ENCODE measurements at regions of chr21 and their contacts with region 1.

Region 1: GRCh38 chr21:25561668-25562641 is 45.3 kb downstream of the MRPL39 start:
- DNase-seq: peak; percentile 90
- ATAC-seq: peak; percentile 70
- H3K4me3 Mint-ChIP-seq: peak overlapping the region; percentile 83
- H3K27ac Mint-ChIP-seq: peak overlapping the region; percentile 98
- H3K4me1 Mint-ChIP-seq: peaks cover 42% of the 10 kb centered on the region
- H3K27me3 Mint-ChIP-seq: no peaks in the 10 kb centered on the region
- CTCF ChIP-seq: no peak

Region 2: GRCh38 chr21:25396135-25396711 is 165.7 kb before region 1 on chr21:
- CTCF ChIA-PET with region 1: no interaction called
- POLR2A ChIA-PET with region 1: interaction called, 11 read pairs
- intact Hi-C with region 1: no loop called
- DNase-seq: peak; percentile 91
- ATAC-seq: peak; percentile 96
- H3K4me3 Mint-ChIP-seq: peak overlapping the region; percentile 25
- H3K27ac Mint-ChIP-seq: peak overlapping the region; percentile 84
- H3K4me1 Mint-ChIP-seq: peaks cover 27% of the 10 kb centered on the region
- H3K27me3 Mint-ChIP-seq: no peaks in the 10 kb centered on the region
- CTCF ChIP-seq: no peak

Region 3: DNA sequence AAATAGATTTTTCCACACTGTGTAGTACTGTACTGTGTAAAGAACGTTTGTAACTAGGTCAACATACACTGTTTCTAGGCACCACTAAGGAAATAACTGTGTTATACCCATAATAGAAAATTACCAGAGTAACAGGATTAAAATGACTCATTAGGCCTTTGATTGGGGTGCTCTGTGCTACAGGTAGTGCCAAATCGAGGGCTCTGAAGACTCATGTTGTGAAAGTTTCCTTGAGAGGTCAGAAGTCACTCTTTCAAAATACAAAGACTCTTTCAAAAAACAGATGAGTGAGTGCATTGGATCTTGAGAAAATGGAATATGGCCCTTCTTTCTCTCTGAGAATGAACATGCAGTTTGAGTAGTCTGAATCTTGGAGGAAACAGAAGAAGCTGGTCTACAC is 97.7 kb before region 1 on chr21:
- CTCF ChIA-PET with region 1: no interaction called
- POLR2A ChIA-PET with region 1: interaction called, 117 read pairs
- intact Hi-C with region 1: no loop called
- DNase-seq: peak; percentile 48
- ATAC-seq: peak; percentile 74
- H3K4me3 Mint-ChIP-seq: peak overlapping the region; percentile 49
- H3K27ac Mint-ChIP-seq: peak overlapping the region; percentile 98
- H3K4me1 Mint-ChIP-seq: peaks cover 76% of the 10 kb centered on the region
- H3K27me3 Mint-ChIP-seq: no peaks in the 10 kb centered on the region
- CTCF ChIP-seq: no peak

Region 4: DNA sequence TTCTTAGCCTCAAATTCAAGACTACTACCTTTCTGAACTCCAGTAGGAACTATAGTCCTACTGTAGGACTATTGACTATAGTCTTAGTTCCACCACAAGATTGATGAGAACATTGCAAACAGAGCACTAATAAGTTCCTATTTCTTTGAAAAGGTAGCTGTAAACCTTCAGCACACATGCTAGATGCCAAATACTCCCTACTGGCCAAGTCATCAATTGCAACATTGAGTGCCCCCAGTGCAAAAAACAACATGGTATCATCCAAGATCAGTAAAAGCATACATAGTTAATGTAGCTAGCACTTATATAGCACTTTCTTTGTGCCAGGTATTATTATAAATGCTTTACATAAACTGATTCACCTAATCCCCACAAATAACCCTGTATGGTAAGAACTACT is 54.4 kb before region 1 on chr21:
- CTCF ChIA-PET with region 1: interaction called, 6 read pairs
- POLR2A ChIA-PET with region 1: interaction called, 179 read pairs
- intact Hi-C with region 1: loop called (anchors 2 kb)
- DNase-seq: peak; percentile 46
- ATAC-seq: peak; percentile 43
- H3K4me3 Mint-ChIP-seq: peak overlapping the region; percentile 50
- H3K27ac Mint-ChIP-seq: peak overlapping the region; percentile 55
- H3K4me1 Mint-ChIP-seq: peaks cover 63% of the 10 kb centered on the region
- H3K27me3 Mint-ChIP-seq: no peaks in the 10 kb centered on the region
- CTCF ChIP-seq: peak; percentile 28

Region 5: DNA sequence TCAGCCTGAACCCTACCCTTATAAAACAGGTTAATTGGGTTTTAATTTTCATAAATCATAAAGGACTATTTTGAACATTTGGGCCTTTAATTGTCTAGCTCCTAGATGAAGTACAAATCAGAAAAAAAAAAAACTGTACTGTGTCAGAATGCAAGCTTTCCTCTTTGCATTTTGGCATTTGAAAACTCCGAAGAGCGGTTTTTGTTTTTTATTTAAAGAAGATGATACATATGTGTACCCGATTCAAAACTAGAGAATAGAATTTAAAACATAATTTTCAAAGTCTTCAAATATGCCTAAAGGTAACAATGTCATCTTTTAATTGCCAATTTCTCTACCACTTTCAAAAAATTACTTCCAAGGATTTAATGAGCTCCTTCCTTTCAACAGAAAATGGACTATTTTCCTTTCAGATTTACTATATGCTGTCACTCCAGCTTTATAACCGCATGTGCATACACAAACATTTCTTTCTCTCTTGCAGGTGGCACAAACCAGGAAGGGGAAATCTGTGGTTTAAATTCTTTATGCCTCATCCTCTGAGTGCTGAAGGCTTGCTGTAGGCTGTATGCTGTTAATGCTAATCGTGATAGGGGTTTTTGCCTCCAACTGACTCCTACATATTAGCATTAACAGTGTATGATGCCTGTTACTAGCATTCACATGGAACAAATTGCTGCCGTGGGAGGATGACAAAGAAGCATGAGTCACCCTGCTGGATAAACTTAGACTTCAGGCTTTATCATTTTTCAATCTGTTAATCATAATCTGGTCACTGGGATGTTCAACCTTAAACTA is 11.7 kb after region 1 on chr21:
- CTCF ChIA-PET with region 1: interaction called, 5 read pairs
- POLR2A ChIA-PET with region 1: interaction called, 521 read pairs
- intact Hi-C with region 1: loop called (anchors 2 kb)
- DNase-seq: peak; percentile 87
- ATAC-seq: peak; percentile 45
- H3K4me3 Mint-ChIP-seq: peak overlapping the region; percentile 83
- H3K27ac Mint-ChIP-seq: peak overlapping the region; percentile 97
- H3K4me1 Mint-ChIP-seq: peaks cover 70% of the 10 kb centered on the region
- H3K27me3 Mint-ChIP-seq: no peaks in the 10 kb centered on the region
- CTCF ChIP-seq: no peak

Region 6: GRCh38 chr21:25688275-25689155 is 126.6 kb after region 1 on chr21:
- CTCF ChIA-PET with region 1: no interaction called
- POLR2A ChIA-PET with region 1: no interaction called
- intact Hi-C with region 1: no loop called
- DNase-seq: no peak
- ATAC-seq: no peak
- H3K4me3 Mint-ChIP-seq: no peak overlapping the region
- H3K27ac Mint-ChIP-seq: no peak overlapping the region
- H3K4me1 Mint-ChIP-seq: no peaks in the 10 kb centered on the region
- H3K27me3 Mint-ChIP-seq: peaks cover 2% of the 10 kb centered on the region
- CTCF ChIP-seq: no peak

Measured in activated CD8-positive, alpha-beta T cell treated with anti-CD3 and anti-CD28 coated beads for 36 hours (primary cell).